A549 (cell line): ENCODE measurements at regions of chr11 and their contacts with region 1.

Region 1: DNA sequence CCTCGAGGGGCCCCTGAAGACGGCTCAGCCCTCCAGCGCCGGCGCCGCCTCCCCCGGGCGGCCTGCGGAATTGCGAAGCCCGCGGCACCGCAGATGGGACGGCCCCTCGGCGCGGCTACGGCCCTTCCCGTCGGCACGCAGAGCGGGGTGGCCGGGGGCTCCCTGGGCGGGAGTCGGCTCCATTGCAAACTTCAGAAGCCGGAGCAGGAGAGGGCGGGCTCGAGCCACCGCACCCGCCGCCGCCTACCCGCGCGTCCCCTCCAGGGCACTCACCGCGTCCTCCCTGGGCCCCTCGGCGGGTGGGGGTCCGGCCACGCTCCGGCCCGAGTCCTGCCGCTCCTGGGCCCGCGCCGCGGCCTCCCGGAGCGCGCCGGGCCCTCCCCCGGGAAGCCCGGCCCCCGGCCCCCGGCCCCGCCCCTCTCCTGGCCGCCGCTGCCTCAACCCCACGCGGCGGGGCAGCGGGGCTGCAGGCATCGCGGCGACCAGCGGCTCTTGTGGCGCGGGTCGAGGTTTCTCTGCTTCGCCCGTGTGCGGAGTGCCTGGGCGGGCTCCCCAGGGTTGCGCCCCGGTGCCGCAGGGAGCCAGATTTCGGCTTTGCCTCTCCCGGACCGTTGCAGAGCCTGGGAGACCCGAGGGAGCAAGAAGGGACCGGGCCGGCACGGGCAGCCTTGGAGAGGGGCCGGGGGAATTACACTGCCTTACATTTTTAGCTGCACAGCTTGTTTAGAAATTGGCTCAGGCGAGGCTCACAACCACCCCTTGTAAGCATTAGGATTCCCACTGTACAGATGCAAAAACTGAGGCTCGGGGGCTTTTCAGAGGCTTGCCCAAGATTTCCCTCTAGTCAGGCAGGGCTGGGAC is at the start of gene PACSIN3:
- DNase-seq: peak; percentile 58 to 72
- ATAC-seq: peak; percentile 72 to 75
- H3K4me3 ChIP-seq: peak within 1 kb of the TSS; percentile 72
- H3K27ac ChIP-seq: peak within 1 kb of the TSS; percentile 84 to 98
- H3K4me1 ChIP-seq: peaks cover 47% of the 10 kb centered on the region
- CTCF ChIP-seq: no peak
- EP300 ChIP-seq: no peak
- POLR2A ChIP-seq: peak; percentile 59
- RAD21 ChIP-seq: no peak
- polyA plus RNA-seq, gene PACSIN3: 15.8 and 16.5 TPM in 2 replicates

Region 2: DNA sequence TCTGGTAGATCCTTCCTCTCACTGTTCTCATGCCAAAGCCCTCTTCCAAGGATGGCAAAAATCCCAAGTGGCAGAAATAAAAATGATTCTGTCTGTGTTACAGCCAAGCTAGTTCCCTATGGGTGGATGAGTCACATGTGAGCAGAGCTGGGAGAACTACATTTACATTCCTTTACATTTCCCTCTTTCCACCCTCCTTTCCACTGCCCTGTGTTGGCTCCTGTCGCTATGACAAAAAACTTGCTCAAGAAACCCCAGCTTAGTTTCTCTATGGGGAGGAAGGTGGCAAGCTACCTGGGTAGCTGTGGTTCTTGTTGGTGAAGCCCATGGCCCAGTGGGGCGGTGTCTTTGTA is 18.3 kb after region 1 on chr11:
- CTCF ChIA-PET with region 1: interaction called, 11 read pairs
- POLR2A ChIA-PET with region 1: interaction called, 6 read pairs
- DNase-seq: peak; percentile 28 to 46
- ATAC-seq: peak; percentile 83 to 85
- H3K4me3 ChIP-seq: no peak overlapping the region
- H3K27ac ChIP-seq: peak overlapping the region in 1 of 2 experiments; percentile 49; a peak in 2 of 6 replicates
- H3K4me1 ChIP-seq: peaks cover 10% of the 10 kb centered on the region
- CTCF ChIP-seq: no peak
- EP300 ChIP-seq: no peak
- POLR2A ChIP-seq: no peak
- RAD21 ChIP-seq: no peak